Activated naive CD8-positive, alpha-beta T cell treated with anti-CD3 and anti-CD28 coated beads, Interleukin-2, amount 10 ng/mL, durations not matched to agents 7 days and 5 days (primary cell): ENCODE measurements at regions of chr1 and their contacts with region 1.

Region 1: GRCh38 chr1:185393815-185394214 is 76.8 kb upstream of the IVNS1ABP start:
- DNase-seq: no peak
- ATAC-seq: no peak
- H3K4me3 Mint-ChIP-seq: no peak overlapping the region
- H3K27ac Mint-ChIP-seq: no peak overlapping the region
- H3K4me1 Mint-ChIP-seq: peaks cover 4% of the 10 kb centered on the region
- H3K27me3 Mint-ChIP-seq: no peaks in the 10 kb centered on the region

Region 2: DNA sequence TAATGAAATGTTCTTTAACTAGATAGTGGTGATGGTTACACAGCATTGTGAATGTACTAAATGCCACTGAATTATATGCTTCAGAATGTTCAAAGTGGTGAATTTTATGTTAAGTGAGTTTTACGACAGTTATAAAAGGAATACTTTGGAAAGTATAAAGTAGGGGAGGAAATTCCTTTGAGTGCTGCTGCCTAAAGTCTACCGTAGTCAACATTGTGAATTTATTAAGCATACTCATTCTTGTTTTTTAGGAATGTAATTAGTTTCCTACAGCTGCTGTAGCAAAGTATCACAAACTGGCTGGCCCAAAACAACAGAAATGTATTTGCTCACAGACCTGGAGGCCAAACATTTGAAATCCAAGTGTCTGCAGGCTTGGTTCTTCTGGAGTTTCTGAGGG is 163.8 kb before region 1 on chr1:
- POLR2A ChIA-PET with region 1: no interaction called
- DNase-seq: no peak
- ATAC-seq: no peak
- H3K4me3 Mint-ChIP-seq: no peak overlapping the region
- H3K27ac Mint-ChIP-seq: no peak overlapping the region
- H3K4me1 Mint-ChIP-seq: peaks cover 1% of the 10 kb centered on the region
- H3K27me3 Mint-ChIP-seq: no peaks in the 10 kb centered on the region

Region 3: DNA sequence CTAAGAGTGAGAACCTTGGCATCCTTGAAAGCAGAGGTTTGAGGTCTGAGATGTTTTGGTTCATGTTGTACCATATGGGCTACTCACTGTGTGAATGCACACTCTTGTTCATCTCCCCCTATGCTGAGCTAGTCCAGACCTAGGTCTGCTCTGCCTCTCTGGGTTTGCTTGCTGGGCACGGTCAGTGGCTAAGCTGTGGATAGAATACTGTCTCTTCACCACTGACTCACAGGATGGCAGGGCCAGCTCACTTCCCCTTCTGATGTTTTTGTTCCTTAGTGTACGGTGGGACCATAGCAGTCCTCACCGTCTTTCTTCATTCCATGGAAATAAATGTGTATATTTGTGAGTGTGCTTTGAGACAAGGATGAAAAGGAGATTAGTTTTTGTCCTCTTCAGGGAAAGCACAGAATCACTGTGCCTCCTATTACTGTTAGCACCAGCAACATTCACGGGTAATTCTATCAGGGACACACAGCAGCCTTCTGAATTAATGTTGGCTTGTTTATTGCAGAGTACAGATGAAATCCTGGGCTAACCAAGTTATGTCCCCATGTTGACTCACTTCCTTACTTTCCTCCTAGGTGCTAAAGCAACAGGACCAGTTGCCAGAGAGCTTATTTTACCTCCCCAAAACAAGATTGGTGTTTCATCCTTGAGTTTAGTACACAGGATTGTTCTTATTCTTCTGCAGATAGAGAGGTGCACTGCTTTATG is 19.8 kb before region 1 on chr1:
- POLR2A ChIA-PET with region 1: interaction called, 10 read pairs
- DNase-seq: no peak
- ATAC-seq: peak; percentile 23
- H3K4me3 Mint-ChIP-seq: peak overlapping the region; percentile 18
- H3K27ac Mint-ChIP-seq: peak overlapping the region; percentile 76
- H3K4me1 Mint-ChIP-seq: peaks cover 21% of the 10 kb centered on the region
- H3K27me3 Mint-ChIP-seq: no peaks in the 10 kb centered on the region